Activated B cell treated with CpG ODN at 0.5 μM for 24 hours (primary cell): ENCODE measurements at regions of chr14 and their contacts with region 1.

Region 1: DNA sequence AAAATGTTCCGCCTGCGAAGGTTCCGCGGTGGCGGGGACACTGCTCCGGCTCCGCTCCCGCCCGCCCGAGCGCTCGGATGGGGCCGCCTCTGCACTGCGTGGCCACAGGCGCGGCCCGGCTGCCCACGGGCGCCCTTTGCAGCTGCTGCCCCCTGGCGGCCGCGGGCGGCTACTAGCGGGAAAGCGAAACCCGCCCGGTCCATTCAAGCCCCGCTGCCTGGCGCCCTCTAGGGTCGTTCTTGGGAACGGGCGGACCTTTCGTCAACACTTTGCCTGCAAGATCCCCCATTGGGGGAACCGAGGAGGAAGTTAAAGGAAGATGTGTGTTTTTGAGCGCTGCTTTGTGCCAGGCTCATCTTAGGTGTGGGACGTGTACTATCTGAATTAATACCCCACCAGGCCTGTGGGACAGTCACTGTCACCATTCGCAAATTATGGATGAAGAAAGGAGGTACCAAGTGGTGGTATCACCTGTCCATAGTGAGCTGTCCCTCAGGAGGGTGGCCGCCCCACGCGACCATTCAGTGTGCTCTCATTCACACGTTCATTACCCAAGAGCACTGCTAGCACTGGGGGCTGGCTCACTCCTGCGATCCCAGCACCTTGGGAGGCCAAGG is 19.4 kb downstream of the GPR132 start:
- DNase-seq: peak; percentile 93
- ATAC-seq: peak; percentile 90
- H3K4me3 Mint-ChIP-seq: peak overlapping the region; percentile 46
- H3K27ac Mint-ChIP-seq: peak overlapping the region; percentile 59
- H3K4me1 Mint-ChIP-seq: peaks cover 15% of the 10 kb centered on the region
- H3K27me3 Mint-ChIP-seq: no peaks in the 10 kb centered on the region
- CTCF ChIP-seq: peak; percentile 97

Region 2: GRCh38 chr14:104723648-104724406 is 322.0 kb before region 1 on chr14 and contains the start of gene ADSS1:
- CTCF ChIA-PET with region 1: no interaction called
- POLR2A ChIA-PET with region 1: no interaction called
- intact Hi-C with region 1: loop called (anchors 5 kb)
- DNase-seq: peak; percentile 68
- ATAC-seq: peak; percentile 83
- H3K4me3 Mint-ChIP-seq: peak within 1 kb of the TSS; percentile 78
- H3K27ac Mint-ChIP-seq: no peak within 1 kb of the TSS
- H3K4me1 Mint-ChIP-seq: no peaks in the 10 kb centered on the region
- H3K27me3 Mint-ChIP-seq: peaks cover 5% of the 10 kb centered on the region
- CTCF ChIP-seq: peak; percentile 94
- total RNA-seq, gene ADSS1: 0.18 and 0.39 TPM in 2 replicates

Region 3: DNA sequence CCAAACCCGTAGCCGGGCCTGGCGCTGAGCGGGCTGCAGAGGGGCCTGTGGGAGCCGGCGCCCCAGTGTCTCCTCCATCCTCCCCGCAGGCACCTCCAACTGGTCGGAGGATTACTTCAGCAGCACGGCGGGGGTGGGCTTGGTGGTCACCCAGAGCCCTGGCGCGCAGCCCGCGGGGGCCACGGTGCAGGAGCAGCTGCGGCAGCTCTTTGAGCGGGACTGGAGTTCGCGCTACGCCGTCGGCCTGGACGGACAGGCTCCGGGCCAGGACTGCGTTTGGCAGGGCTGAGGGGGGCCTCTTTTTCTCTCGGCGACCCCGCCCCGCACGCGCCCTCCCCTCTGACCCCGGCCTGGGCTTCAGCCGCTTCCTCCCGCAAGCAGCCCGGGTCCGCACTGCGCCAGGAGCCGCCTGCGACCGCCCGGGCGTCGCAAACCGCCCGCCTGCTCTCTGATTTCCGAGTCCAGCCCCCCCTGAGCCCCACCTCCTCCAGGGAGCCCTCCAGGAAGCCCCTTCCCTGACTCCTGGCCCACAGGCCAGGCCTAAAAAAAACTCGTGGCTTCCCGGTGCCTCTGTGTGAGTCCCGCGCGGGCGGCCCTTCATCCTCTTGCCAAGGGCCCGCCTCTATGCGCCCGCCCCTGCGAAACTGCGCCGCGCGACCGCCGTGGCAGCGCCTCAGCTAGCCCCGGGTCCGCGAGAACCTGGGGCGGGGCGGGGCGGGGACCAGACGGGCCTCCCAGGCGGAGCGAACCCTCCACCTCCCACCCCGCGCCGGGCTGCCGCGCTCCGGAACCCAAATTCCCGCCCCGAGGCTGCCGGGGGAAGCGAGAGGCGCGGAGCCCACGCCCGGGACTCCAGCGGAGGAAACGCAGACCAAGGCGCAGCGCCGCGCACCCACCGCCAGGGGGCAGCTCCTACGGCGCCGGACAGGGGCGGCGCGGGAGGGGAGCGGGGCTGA is 112.9 kb before region 1 on chr14:
- CTCF ChIA-PET with region 1: no interaction called
- POLR2A ChIA-PET with region 1: interaction called, 10 read pairs
- intact Hi-C with region 1: loop called (anchors 1 kb)
- DNase-seq: peak; percentile 86
- ATAC-seq: peak; percentile 81
- H3K4me3 Mint-ChIP-seq: peak overlapping the region; percentile 72
- H3K27ac Mint-ChIP-seq: no peak overlapping the region
- H3K4me1 Mint-ChIP-seq: peaks cover 16% of the 10 kb centered on the region
- H3K27me3 Mint-ChIP-seq: no peaks in the 10 kb centered on the region
- CTCF ChIP-seq: no peak

Region 4: DNA sequence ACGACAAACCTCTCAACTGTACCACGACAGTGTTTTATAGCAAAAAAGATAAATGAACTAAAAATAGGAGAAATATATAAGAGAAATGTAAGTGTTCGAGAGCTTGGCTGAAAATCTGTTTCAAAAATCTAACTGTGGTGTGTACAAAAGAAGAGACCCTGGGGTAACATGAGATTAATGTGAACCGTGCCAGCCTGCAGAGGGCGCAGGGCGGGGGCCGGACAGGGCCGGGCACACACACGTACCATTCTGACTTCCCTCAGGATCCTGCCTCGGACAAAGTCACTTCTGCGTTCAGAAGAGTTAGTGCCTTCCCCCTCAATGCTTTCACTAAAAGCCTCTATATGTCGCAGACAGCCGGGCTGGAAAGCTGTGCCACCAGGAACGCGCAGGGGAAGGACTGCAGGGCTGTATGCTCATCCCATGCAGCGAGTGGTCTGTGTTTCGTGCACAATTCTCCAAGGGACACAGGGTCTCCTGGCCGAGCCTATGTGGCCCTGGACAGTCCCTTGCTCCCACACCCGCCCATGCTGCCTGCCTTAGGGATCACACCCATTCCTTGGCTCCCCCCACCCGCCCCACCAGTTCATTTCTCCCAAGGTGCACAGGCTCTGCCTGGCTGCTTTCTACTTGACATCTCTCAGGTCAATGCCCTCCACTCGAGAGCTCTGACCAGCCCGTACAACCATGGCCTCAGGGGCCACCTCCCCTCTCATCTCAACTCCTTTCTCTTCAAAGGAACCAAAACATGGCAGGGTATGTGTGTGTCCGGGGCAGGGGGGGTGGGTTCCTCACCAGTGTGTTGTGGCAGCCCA is 33.4 kb before region 1 on chr14:
- CTCF ChIA-PET with region 1: interaction called, 4 read pairs
- POLR2A ChIA-PET with region 1: no interaction called
- intact Hi-C with region 1: loop called (anchors 1 kb)
- DNase-seq: no peak
- ATAC-seq: no peak
- H3K4me3 Mint-ChIP-seq: no peak overlapping the region
- H3K27ac Mint-ChIP-seq: no peak overlapping the region
- H3K4me1 Mint-ChIP-seq: peaks cover 42% of the 10 kb centered on the region
- H3K27me3 Mint-ChIP-seq: no peaks in the 10 kb centered on the region
- CTCF ChIP-seq: no peak

Region 5: GRCh38 chr14:105059035-105059924 is 13.5 kb after region 1 on chr14:
- CTCF ChIA-PET with region 1: interaction called, 10 read pairs
- POLR2A ChIA-PET with region 1: interaction called, 6 read pairs
- intact Hi-C with region 1: loop called (anchors 2 kb)
- DNase-seq: no peak
- ATAC-seq: no peak
- H3K4me3 Mint-ChIP-seq: peak overlapping the region; percentile 51
- H3K27ac Mint-ChIP-seq: peak overlapping the region; percentile 89
- H3K4me1 Mint-ChIP-seq: peaks cover 55% of the 10 kb centered on the region
- H3K27me3 Mint-ChIP-seq: no peaks in the 10 kb centered on the region
- CTCF ChIP-seq: no peak

Region 6: GRCh38 chr14:105086833-105087307 is 41.1 kb after region 1 on chr14:
- CTCF ChIA-PET with region 1: interaction called, 17 read pairs
- POLR2A ChIA-PET with region 1: interaction called, 5 read pairs
- intact Hi-C with region 1: loop called (anchors 1 kb)
- DNase-seq: peak; percentile 81
- ATAC-seq: peak; percentile 89
- H3K4me3 Mint-ChIP-seq: peak overlapping the region; percentile 80
- H3K27ac Mint-ChIP-seq: no peak overlapping the region
- H3K4me1 Mint-ChIP-seq: peaks cover 14% of the 10 kb centered on the region
- H3K27me3 Mint-ChIP-seq: peaks cover 6% of the 10 kb centered on the region
- CTCF ChIP-seq: peak; percentile 82